Caco-2 (cell line): ENCODE measurements at regions of chr19 and their contacts with region 1.

Region 1: GRCh38 chr19:16495982-16496612 is at the starts of genes C19orf44 and CALR3:
- DNase-seq: peak; percentile 98
- H3K4me3 ChIP-seq: peak within 1 kb of the TSS; percentile 67
- H3K4me3 Mint-ChIP-seq: peak within 1 kb of the TSS; percentile 91
- H3K27ac Mint-ChIP-seq: peak within 1 kb of the TSS; percentile 82
- H3K4me1 ChIP-seq: peaks cover 20% of the 10 kb centered on the region
- H3K4me1 Mint-ChIP-seq: no peaks in the 10 kb centered on the region
- H3K27me3 ChIP-seq: no peaks in the 10 kb centered on the region
- H3K27me3 Mint-ChIP-seq: no peaks in the 10 kb centered on the region
- CTCF ChIP-seq: no peak
- total RNA-seq, gene C19orf44: 3.4 and 4.6 TPM in 2 replicates
- total RNA-seq, gene CALR3: 0.32 TPM in 1 of 2 replicates, not detected in the other

Region 2: GRCh38 chr19:16433986-16434385 is 62.1 kb before region 1 on chr19:
- CTCF ChIA-PET with region 1: no interaction called
- POLR2A ChIA-PET with region 1: no interaction called
- intact Hi-C with region 1: no loop called
- DNase-seq: no peak
- H3K4me3 ChIP-seq: no peak overlapping the region
- H3K4me3 Mint-ChIP-seq: no peak overlapping the region
- H3K27ac Mint-ChIP-seq: no peak overlapping the region
- H3K4me1 ChIP-seq: no peaks in the 10 kb centered on the region
- H3K4me1 Mint-ChIP-seq: no peaks in the 10 kb centered on the region
- H3K27me3 ChIP-seq: no peaks in the 10 kb centered on the region
- H3K27me3 Mint-ChIP-seq: no peaks in the 10 kb centered on the region
- CTCF ChIP-seq: no peak

Region 3: DNA sequence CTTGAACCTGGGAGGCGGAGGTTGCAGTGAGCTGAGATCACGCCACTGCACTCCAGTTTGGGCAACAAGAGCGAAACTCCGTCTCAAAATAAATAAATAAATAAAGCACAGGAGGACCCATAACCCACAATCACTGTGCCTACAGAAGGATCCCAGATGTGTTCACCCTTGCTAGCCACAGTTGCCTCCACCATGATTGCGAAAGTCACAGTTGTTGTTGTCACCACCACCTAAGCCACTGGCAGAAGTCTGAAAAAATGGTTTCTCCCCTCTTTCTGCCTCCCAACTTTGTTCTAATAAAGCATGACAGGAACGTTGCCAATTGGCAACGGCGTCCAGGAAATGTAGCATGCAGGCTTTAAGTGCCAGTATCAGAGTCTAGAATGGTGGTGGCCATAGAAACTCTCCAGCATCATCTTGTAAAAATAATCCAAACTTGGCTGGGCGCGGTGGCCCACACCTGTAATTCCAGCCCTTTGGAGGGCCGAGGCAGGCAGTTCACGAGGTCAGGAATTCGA is 22.2 kb before region 1 on chr19:
- CTCF ChIA-PET with region 1: no interaction called
- POLR2A ChIA-PET with region 1: interaction called, 3 read pairs
- intact Hi-C with region 1: loop called (anchors 2 kb)
- DNase-seq: no peak
- H3K4me3 ChIP-seq: no peak overlapping the region
- H3K4me3 Mint-ChIP-seq: no peak overlapping the region
- H3K27ac Mint-ChIP-seq: no peak overlapping the region
- H3K4me1 ChIP-seq: peaks cover 4% of the 10 kb centered on the region
- H3K4me1 Mint-ChIP-seq: peaks cover 17% of the 10 kb centered on the region
- H3K27me3 ChIP-seq: no peaks in the 10 kb centered on the region
- H3K27me3 Mint-ChIP-seq: no peaks in the 10 kb centered on the region
- CTCF ChIP-seq: no peak